Heart right ventricle (tissue), 16 donors: ENCODE measurements at regions of chr14 and their contacts with region 1.

Region 1: DNA sequence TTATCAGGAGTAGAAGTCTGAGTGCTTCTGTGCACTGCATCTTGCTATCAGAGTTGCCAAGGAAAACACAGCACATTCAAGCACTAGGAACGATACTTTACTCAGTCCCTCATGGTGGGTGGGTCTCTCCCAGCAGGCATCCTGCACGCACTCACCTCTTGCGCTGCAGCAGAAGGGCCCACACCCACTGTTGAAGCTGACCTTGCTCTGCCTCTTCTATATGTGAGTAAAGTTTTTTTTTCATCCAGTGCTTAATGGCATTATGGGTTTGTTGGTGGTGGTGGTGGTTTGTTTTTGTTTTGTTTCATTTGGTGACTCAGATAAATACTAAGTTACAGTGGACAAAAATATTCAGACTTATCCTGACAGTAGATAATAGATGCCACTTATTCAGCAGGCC is 348.5 kb downstream of the EGLN3 start:
- DNase-seq: no peak
- ATAC-seq: no peak
- H3K4me3 ChIP-seq: no peak overlapping the region
- H3K27ac ChIP-seq: no peak overlapping the region
- H3K4me1 ChIP-seq: no peaks in the 10 kb centered on the region
- H3K27me3 ChIP-seq: no peaks in the 10 kb centered on the region
- CTCF ChIP-seq: no peak

Region 2: GRCh38 chr14:33556382-33557121 is 45.8 kb before region 1 on chr14:
- intact Hi-C with region 1: loop called in 1 of 10 experiments (anchors 1 kb)
- DNase-seq: no peak
- ATAC-seq: no peak
- H3K4me3 ChIP-seq: no peak overlapping the region
- H3K27ac ChIP-seq: no peak overlapping the region
- H3K4me1 ChIP-seq: no peaks in the 10 kb centered on the region
- H3K27me3 ChIP-seq: no peaks in the 10 kb centered on the region
- CTCF ChIP-seq: no peak